ENCODE measurements at regions of chr7 and their contacts with region 1.

Region 1: DNA sequence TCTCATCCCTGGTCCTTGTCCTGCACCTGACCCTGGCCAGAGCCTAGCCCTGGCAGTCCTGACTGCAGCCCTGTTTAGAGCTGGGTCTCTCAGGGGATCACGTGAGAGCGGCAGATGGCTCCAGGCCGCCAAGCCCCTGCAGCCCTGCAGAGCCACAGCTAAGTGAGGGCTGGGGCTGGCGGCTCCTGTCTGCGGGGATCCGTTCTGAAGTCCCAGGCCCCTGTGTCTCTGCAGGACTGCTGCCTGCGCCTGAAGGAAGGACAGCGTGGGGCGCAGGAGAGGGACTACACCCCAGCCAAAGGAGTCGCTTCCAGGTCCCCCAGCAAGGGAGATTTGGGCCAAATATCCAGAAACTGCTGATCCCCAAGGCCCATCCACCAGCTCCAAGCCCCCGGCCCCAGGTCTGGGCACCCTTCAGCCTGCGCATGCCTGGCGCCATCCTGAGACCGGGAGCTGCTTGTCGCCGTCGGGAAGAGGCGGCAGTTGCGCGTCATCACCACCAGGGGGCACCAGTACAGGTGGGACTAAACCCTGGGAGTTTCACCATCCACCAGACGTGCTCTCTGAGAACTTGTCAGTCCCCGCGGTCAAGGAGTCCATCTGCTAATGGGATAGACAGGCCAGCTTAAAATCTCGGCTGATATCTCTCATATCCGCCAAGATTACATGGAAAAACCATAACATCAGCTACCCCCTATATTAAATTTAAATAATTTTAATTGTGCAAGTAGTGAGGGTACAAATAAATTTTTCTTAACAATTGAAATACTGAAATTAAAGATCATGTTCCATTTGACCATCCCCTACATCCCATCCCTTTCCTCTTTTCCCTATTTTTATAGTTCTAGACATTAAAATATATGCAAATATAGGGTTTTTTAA is 25.1 kb upstream of the GHRHR start:
- DNase-seq: peak; percentile 81 to 88
- ATAC-seq: peak; percentile 85 to 96
- H3K4me3 ChIP-seq: 0 out of 3 replicates have a peak overlapping the region, but pooled peaks have one; percentile 8
- H3K27ac ChIP-seq: peak overlapping the region in 1 of 2 experiments; percentile 46; a peak in 1 of 6 replicates
- H3K4me1 ChIP-seq: 0 out of 3 replicates have a peak, but pooled peaks cover 3% of the 10 kb centered on the region
- CTCF ChIP-seq: peak; percentile 84
- EP300 ChIP-seq: no peak
- POLR2A ChIP-seq: no peak
- RAD21 ChIP-seq: peak; percentile 50 to 52

Region 2: GRCh38 chr7:30923009-30923773 is 15.5 kb before region 1 on chr7:
- CTCF ChIA-PET with region 1: interaction called, 37 read pairs
- POLR2A ChIA-PET with region 1: no interaction called
- DNase-seq: no peak
- ATAC-seq: no peak
- H3K4me3 ChIP-seq: no peak overlapping the region
- H3K27ac ChIP-seq: no peak overlapping the region
- H3K4me1 ChIP-seq: peaks cover 12% of the 10 kb centered on the region; the same call in 2 of the 3 replicates
- CTCF ChIP-seq: no peak
- EP300 ChIP-seq: no peak
- POLR2A ChIP-seq: no peak
- RAD21 ChIP-seq: no peak

Region 3: DNA sequence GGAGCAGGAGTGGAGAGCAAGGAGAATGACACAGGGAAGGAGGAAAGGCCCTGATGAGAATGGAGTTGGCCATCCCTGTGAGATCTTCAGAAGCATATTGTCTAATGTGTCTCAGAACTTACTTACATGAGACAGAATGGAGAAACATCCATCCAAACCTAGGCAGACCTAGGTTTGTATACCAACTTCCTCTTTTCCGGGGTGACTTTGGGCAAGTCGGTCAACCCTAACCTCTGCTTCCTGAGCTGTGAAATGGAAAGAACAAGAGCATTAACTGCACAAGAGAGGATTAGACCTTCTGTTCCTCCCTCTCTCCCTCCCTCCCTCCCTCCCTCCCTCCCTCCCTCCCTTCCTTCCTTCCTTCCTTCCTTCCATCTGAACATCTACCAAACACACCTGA is 29.6 kb after region 1 on chr7:
- CTCF ChIA-PET with region 1: interaction called, 19 read pairs
- POLR2A ChIA-PET with region 1: no interaction called
- DNase-seq: no peak
- ATAC-seq: no peak
- H3K4me3 ChIP-seq: no peak overlapping the region
- H3K27ac ChIP-seq: no peak overlapping the region
- H3K4me1 ChIP-seq: no peaks in the 10 kb centered on the region
- CTCF ChIP-seq: no peak
- EP300 ChIP-seq: no peak
- POLR2A ChIP-seq: no peak
- RAD21 ChIP-seq: no peak

Region 4: DNA sequence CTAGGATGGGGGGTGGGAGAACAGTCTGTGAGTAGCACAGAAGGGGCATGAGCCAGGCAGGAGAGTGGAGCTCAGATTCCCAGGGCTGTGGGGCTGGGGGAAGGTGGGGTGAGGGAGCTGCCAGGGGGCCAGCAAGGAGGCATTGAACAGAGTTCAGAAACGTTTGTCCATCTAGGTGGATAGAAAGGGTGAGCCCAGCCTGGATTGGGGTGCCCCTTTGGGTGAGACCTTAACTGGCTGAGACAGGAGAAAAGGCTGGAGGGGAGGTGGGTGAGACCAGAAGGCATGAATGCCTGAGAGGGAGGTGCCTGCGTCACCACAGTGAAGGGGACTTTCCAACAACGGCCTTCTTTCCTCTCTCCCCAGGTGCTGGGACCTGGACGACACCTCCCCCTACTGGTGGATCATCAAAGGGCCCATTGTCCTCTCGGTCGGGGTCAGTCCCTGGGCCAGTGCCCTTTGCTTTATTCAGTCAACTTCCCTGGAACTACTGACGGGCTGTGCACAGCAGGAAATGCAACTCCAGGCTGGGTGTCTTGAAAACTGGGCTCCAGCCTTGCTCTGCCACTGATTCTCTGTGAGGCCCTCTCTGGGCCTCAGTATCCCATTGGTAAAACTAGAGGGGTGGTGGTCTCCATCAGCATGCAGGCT is 36.1 kb after region 1 on chr7:
- CTCF ChIA-PET with region 1: interaction called, 19 read pairs
- POLR2A ChIA-PET with region 1: no interaction called
- DNase-seq: peak; percentile 57 to 72
- ATAC-seq: peak; percentile 67 to 89; a peak in 4 of 6 replicates
- H3K4me3 ChIP-seq: no peak overlapping the region
- H3K27ac ChIP-seq: peak overlapping the region in 1 of 2 experiments; percentile 39; a peak in 1 of 6 replicates
- H3K4me1 ChIP-seq: 0 out of 3 replicates have a peak, but pooled peaks cover 5% of the 10 kb centered on the region
- CTCF ChIP-seq: peak; percentile 43
- EP300 ChIP-seq: no peak
- POLR2A ChIP-seq: no peak
- RAD21 ChIP-seq: peak; percentile 39 to 64; a peak in 4 of 5 replicates

Region 5: DNA sequence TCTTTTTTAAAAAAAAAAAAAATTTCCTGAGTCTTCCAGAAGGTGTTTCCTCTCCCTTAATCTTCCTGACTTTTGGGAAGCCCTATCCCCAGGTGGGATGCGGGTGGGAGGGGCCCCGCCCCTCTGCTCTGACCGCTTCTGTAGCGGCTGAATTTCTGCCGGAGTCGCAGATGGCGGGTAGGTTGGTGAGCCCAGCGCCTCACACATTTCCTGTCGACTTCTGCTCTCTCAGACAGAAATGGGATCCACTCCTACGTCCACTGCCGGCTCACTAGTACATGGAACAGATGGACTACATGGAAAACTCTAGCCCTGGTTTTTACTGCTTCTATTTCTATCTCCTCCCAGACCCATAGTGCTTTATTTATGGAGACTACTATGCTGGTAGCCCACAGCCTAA is 311.0 kb after region 1 on chr7:
- CTCF ChIA-PET with region 1: no interaction called
- POLR2A ChIA-PET with region 1: no interaction called
- DNase-seq: no peak
- ATAC-seq: no peak
- H3K4me3 ChIP-seq: no peak overlapping the region
- H3K27ac ChIP-seq: no peak overlapping the region
- H3K4me1 ChIP-seq: no peaks in the 10 kb centered on the region
- CTCF ChIP-seq: no peak
- EP300 ChIP-seq: no peak
- POLR2A ChIP-seq: no peak
- RAD21 ChIP-seq: no peak

Measured in A549 (cell line).